Mammary epithelial cell (primary cell): ENCODE measurements at regions of chr1 and their contacts with region 1.

Region 1: GRCh38 chr1:190168893-190169667 is 308.6 kb downstream of the BRINP3 start:
- DNase-seq: peak; percentile 12
- H3K4me3 ChIP-seq: no peak overlapping the region
- H3K27ac ChIP-seq: no peak overlapping the region
- H3K4me1 ChIP-seq: peaks cover 16% of the 10 kb centered on the region
- H3K27me3 ChIP-seq: peaks cover 2% of the 10 kb centered on the region
- CTCF ChIP-seq: no peak

Region 2: DNA sequence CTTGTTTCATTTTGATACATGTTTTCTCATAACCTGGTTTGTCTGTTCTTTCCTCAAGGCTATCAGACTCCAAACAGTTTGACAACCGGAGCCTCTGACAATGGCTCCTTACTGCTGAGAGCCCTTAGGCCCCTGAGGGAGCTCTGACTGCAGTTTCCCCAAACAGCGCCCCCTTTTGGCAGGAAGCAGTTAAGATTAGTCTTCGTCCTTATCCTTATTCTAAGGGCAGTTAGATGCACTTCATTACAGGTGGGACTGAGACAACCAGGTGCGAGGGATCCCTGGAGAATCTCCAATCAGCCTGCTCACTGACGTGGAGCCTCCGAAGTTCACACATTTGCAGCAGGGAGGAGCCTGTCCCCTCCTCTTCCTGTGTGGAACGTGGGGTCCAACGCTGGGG is 84.5 kb before region 1 on chr1:
- CTCF ChIA-PET with region 1: no interaction called
- dilution Hi-C with region 1: no loop called
- in situ Hi-C with region 1: no loop called
- intact Hi-C with region 1: no loop called
- DNase-seq: no peak
- H3K4me3 ChIP-seq: no peak overlapping the region
- H3K27ac ChIP-seq: no peak overlapping the region
- H3K4me1 ChIP-seq: no peaks in the 10 kb centered on the region
- H3K27me3 ChIP-seq: no peaks in the 10 kb centered on the region
- CTCF ChIP-seq: peak; percentile 28 to 33

Region 3: DNA sequence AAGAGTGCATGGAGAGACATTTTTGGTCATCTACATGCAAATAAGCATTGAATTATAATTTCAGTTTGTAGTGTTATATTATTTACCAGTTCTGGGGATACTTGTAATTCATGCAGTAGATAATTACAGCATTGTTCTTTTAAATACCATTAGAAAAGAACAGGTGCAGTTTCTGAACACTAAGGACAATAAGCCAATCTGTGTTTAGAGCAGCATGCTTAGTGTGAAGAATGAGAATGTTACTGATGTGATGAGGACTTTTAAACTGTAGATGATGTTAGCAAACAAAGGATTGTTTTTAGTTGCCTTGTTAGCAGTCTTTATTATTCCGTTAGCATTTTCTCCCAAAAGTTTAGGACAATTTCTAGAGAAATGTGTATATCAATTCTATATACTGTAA is 39.7 kb before region 1 on chr1:
- CTCF ChIA-PET with region 1: no interaction called
- dilution Hi-C with region 1: no loop called
- in situ Hi-C with region 1: no loop called
- intact Hi-C with region 1: loop called (anchors 1 kb)
- DNase-seq: no peak
- H3K4me3 ChIP-seq: no peak overlapping the region
- H3K27ac ChIP-seq: no peak overlapping the region
- H3K4me1 ChIP-seq: no peaks in the 10 kb centered on the region
- H3K27me3 ChIP-seq: no peaks in the 10 kb centered on the region
- CTCF ChIP-seq: no peak

Region 4: DNA sequence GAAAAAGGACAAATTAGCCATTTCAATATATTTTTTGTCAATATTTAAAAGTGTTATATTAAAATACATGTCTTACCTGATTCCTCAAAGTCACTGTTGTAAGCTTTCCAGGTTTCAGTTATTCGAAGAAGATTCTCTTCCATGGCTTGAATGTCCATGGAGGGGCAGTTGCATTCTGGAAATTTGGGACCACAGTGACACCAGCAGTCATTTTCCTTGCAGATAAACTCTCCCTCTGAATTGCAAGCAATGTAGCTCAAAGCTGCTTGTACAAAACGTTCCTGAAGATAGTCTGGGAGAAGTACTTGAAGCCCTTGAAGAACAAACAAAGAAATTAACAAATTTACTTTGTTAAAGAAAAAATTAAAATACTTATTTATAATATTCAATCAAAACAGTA is 56.9 kb after region 1 on chr1:
- CTCF ChIA-PET with region 1: no interaction called
- dilution Hi-C with region 1: loop called (anchors 10 kb)
- in situ Hi-C with region 1: no loop called
- intact Hi-C with region 1: no loop called
- DNase-seq: no peak
- H3K4me3 ChIP-seq: no peak overlapping the region
- H3K27ac ChIP-seq: no peak overlapping the region
- H3K4me1 ChIP-seq: no peaks in the 10 kb centered on the region
- H3K27me3 ChIP-seq: no peaks in the 10 kb centered on the region
- CTCF ChIP-seq: no peak